GM12878 (cell line): ENCODE measurements at regions of chr4 and their contacts with region 1.

Region 1: GRCh38 chr4:137677863-137678262 is 145.6 kb upstream of the PCDH18 start:
- DNase-seq: no peak
- ATAC-seq: no peak
- H3K4me3 ChIP-seq: no peak overlapping the region
- H3K27ac ChIP-seq: no peak overlapping the region
- H3K4me1 ChIP-seq: no peaks in the 10 kb centered on the region
- H3K27me3 ChIP-seq: no peaks in the 10 kb centered on the region
- CTCF ChIP-seq: no peak
- EP300 ChIP-seq: no peak
- POLR2A ChIP-seq: no peak
- RAD21 ChIP-seq: no peak

Region 2: DNA sequence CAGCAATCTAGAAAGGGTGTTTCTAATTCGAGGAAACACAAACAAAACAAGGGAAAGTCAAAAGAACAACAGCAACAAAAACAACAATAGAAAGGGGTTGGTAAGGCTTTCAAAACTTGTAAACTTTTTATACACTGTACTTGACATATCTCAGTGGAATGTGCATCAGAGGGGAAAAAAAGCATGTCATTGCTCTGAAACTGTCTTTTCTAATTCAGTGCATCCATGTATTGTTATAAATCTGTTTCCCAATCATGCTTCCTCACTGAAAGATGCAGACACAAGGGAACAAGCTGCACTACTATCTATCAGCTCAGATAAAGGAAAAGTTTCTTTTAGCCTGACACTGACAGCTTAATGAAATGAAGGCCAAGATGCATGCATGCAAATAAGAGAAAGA is 101.4 kb before region 1 on chr4:
- CTCF ChIA-PET with region 1: no interaction called
- POLR2A ChIA-PET with region 1: no interaction called
- RAD21 ChIA-PET with region 1: no interaction called
- SMC1A ChIA-PET with region 1: no interaction called
- in situ Hi-C with region 1: no loop called
- intact Hi-C with region 1: no loop called
- DNase-seq: no peak
- ATAC-seq: peak; percentile 12
- H3K4me3 ChIP-seq: no peak overlapping the region
- H3K27ac ChIP-seq: no peak overlapping the region
- H3K4me1 ChIP-seq: no peaks in the 10 kb centered on the region
- H3K27me3 ChIP-seq: no peaks in the 10 kb centered on the region
- CTCF ChIP-seq: no peak
- EP300 ChIP-seq: no peak
- POLR2A ChIP-seq: no peak
- RAD21 ChIP-seq: no peak

Region 3: DNA sequence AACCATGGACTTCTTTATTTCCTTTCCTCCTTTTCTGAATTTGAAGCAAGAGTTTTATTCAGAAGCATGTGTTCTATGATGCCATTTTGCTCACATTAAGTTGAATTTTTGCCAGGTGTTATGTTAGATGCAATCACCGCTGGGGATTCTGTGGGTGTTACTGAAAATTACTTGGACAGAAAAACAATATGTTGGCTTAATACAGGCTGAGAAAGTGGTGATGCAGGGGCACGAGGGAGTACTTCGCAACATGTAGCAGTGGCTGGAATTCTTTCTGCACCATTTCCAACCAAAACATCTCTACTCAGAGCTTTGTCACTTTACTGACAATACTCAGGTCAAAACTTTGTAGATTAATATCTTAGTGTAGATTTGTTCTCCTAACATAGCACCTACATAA is 36.3 kb before region 1 on chr4:
- CTCF ChIA-PET with region 1: interaction called, 3 read pairs
- POLR2A ChIA-PET with region 1: no interaction called
- RAD21 ChIA-PET with region 1: no interaction called
- SMC1A ChIA-PET with region 1: no interaction called
- in situ Hi-C with region 1: no loop called
- intact Hi-C with region 1: loop called (anchors 2 kb)
- DNase-seq: no peak
- ATAC-seq: no peak
- H3K4me3 ChIP-seq: no peak overlapping the region
- H3K27ac ChIP-seq: no peak overlapping the region
- H3K4me1 ChIP-seq: peaks cover 6% of the 10 kb centered on the region; the same call in 1 of the 2 replicates
- H3K27me3 ChIP-seq: no peaks in the 10 kb centered on the region
- CTCF ChIP-seq: no peak
- EP300 ChIP-seq: no peak
- POLR2A ChIP-seq: no peak
- RAD21 ChIP-seq: no peak